RWPE1 (cell line): ENCODE measurements at regions of chr9 and their contacts with region 1.

Region 1: GRCh38 chr9:125255781-125256391 is 5.7 kb upstream of the GAPVD1 start:
- DNase-seq: no peak
- H3K27ac ChIP-seq: no peak overlapping the region
- CTCF ChIP-seq: peak; percentile 46; the same call in 1 of the 2 replicates

Region 2: DNA sequence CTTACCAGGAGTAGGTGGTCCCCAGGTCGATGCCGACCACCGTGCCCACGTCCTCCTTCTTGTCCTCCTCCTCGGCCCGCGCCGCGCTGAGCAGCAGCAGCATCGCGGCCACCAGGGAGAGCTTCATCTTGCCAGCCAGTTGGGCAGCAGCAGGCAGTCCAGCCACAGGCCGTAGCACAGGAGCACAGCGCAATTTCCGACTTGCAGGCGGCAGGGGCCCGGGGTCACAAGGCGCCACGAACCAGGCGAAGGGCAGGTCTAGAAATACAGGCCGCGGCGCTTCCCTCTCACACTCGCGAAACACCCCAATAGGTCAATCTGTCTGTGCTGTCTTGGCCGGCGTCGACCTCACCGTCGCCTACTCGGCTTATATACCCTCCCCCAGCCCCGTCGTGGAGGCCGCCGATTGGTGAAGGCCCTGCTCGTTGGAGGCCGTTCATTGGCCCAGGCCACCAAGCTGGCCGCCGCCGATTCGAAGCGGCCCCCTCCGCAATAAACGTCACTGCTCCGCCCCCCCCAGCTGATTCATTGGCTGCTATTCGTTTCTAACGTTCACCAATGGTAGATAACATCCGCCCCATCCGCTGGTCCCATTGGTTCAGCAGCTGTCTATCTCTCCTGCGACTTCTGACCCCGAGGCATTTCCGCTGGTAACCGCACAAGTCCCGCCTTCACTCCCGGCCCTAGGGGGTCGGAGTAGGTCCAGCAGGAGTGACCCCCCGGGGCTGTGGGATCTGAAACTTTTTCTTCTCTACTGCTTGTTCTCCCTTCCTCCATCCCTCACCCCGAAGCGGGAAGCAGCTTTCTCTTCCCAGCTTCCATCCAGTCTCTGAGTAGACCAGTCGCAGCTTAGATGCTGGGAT is 14.7 kb before region 1 on chr9 and contains the start of gene HSPA5:
- CTCF ChIA-PET with region 1: no interaction called
- POLR2A ChIA-PET with region 1: interaction called, 11 read pairs
- DNase-seq: peak; percentile 100
- H3K27ac ChIP-seq: peak within 1 kb of the TSS; percentile 91
- CTCF ChIP-seq: no peak; the same call in 1 of the 2 replicates

Region 3: DNA sequence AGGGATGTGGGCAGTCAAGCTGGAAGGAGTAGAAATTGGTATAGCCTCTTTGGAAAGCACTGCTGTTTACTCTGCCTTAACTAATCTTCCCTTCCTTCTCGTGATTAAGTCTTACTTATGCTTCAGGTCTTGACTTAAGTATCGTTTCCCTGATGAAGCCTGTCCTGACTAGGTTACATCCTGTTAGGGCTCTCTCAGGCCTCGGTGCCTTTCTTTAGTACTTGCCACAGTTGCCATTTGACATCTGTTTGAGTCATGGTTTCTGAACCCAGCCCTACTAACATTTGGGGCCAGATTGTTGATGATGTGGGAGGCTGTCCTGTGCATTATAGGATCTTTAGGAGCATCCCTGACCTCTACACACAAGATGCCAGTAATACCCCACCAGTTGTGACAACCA is 100.1 kb after region 1 on chr9:
- CTCF ChIA-PET with region 1: no interaction called
- POLR2A ChIA-PET with region 1: no interaction called
- DNase-seq: no peak
- H3K27ac ChIP-seq: no peak overlapping the region
- CTCF ChIP-seq: no peak